ENCODE measurements at regions of chr2 and their contacts with region 1.

Region 1: DNA sequence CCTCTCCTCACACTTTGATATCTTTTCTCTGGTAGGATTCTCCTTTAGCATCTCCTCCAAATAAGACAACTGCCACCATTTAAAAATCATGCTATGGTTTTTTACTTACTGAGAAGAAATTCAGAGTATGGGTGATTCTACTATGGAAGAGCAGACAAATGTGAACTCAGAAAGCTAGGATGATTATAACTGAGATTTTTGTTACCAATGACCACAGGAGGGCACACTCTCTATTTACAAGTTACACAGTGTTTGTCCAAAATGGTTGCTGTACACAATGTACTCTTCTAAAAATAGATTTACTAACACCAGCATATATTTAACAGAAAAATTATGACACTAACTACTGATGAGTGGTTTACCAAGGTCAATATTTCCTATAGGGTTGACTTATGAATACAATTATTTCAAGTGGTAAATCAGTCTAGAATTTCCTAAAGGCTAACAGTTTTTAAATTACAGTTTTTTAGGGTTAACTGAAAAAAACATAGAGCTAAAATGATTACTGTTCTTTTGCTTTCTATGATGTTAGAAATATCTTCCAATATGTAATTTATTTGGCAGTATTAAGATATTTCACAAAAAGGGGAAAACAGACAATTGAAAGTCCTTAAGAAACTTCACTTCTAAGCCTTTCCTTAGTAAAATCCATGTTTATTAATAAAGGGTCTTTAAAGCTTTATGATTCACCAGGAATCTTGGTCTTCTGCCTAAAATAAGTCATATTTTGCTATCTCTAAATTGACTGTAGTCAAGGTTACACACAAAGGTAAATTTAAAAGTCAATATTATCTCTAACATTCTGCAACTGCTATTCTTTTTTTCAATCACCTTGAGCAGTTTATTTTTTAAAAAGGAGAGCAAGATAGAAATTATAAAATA is 57.2 kb downstream of the MAP4K3 start:
- DNase-seq: peak; percentile 31
- ATAC-seq: peak; percentile 84
- H3K4me3 ChIP-seq: no peak overlapping the region
- H3K27ac ChIP-seq: no peak overlapping the region
- H3K4me1 ChIP-seq: no peaks in the 10 kb centered on the region; the same call in 1 of the 2 replicates
- H3K27me3 ChIP-seq: no peaks in the 10 kb centered on the region
- CTCF ChIP-seq: peak; percentile 46 to 66 (median 48); a peak in 4 of 6 replicates
- EP300 ChIP-seq: no peak
- POLR2A ChIP-seq: no peak
- RAD21 ChIP-seq: peak; percentile 66

Region 2: GRCh38 chr2:39266139-39266805 is 113.6 kb before region 1 on chr2:
- CTCF ChIA-PET with region 1: interaction called, 3 read pairs
- POLR2A ChIA-PET with region 1: no interaction called
- RAD21 ChIA-PET with region 1: interaction called, 3 read pairs
- SMC1A ChIA-PET with region 1: interaction called, 13 read pairs
- in situ Hi-C with region 1: no loop called
- intact Hi-C with region 1: no loop called
- DNase-seq: peak; percentile 53
- ATAC-seq: peak; percentile 88
- H3K4me3 ChIP-seq: no peak overlapping the region
- H3K27ac ChIP-seq: peak overlapping the region; percentile 14; the same call in 1 of the 2 replicates
- H3K4me1 ChIP-seq: peaks cover 29% of the 10 kb centered on the region; the same call in 1 of the 2 replicates
- H3K27me3 ChIP-seq: no peaks in the 10 kb centered on the region
- CTCF ChIP-seq: no peak
- EP300 ChIP-seq: no peak
- POLR2A ChIP-seq: no peak
- RAD21 ChIP-seq: no peak

Region 3: GRCh38 chr2:39368846-39369245 is 11.0 kb before region 1 on chr2:
- CTCF ChIA-PET with region 1: interaction called, 21 read pairs
- POLR2A ChIA-PET with region 1: interaction called, 3 read pairs
- RAD21 ChIA-PET with region 1: interaction called, 8 read pairs
- SMC1A ChIA-PET with region 1: interaction called, 5 read pairs
- in situ Hi-C with region 1: no loop called
- intact Hi-C with region 1: no loop called
- DNase-seq: no peak
- ATAC-seq: no peak
- H3K4me3 ChIP-seq: no peak overlapping the region
- H3K27ac ChIP-seq: no peak overlapping the region
- H3K4me1 ChIP-seq: no peaks in the 10 kb centered on the region
- H3K27me3 ChIP-seq: no peaks in the 10 kb centered on the region
- CTCF ChIP-seq: no peak
- EP300 ChIP-seq: no peak
- POLR2A ChIP-seq: no peak
- RAD21 ChIP-seq: no peak

Region 4: DNA sequence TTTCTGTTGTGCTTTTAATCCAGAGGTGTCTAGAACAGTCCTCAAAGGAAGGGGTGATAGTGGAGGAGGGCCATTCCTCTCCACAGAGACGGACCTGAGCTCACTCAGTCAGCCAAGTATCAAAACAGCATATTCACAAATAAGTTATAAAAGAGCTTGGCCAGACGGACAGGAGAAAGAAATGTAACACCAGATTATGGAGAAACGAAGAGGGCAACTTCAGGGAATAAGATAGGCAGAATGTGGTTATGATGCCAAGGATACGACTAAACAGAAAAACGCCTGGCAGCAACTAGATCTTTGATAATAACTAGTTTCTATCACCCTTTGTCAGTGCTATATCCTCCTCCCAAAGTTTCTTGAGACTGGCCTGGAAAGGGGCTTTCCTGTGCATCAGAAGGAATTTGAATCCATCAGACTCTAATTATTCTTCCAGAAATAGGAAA is 14.7 kb after region 1 on chr2:
- CTCF ChIA-PET with region 1: interaction called, 11 read pairs
- POLR2A ChIA-PET with region 1: no interaction called
- RAD21 ChIA-PET with region 1: interaction called, 3 read pairs
- SMC1A ChIA-PET with region 1: interaction called, 3 read pairs
- in situ Hi-C with region 1: no loop called
- intact Hi-C with region 1: no loop called
- DNase-seq: no peak
- ATAC-seq: no peak
- H3K4me3 ChIP-seq: no peak overlapping the region
- H3K27ac ChIP-seq: no peak overlapping the region
- H3K4me1 ChIP-seq: no peaks in the 10 kb centered on the region
- H3K27me3 ChIP-seq: no peaks in the 10 kb centered on the region
- CTCF ChIP-seq: no peak
- EP300 ChIP-seq: no peak
- POLR2A ChIP-seq: no peak
- RAD21 ChIP-seq: no peak

Region 5: GRCh38 chr2:39492095-39492590 is 112.3 kb after region 1 on chr2:
- CTCF ChIA-PET with region 1: interaction called, 4 read pairs
- POLR2A ChIA-PET with region 1: interaction called, 3 read pairs
- RAD21 ChIA-PET with region 1: interaction called, 9 read pairs
- SMC1A ChIA-PET with region 1: interaction called, 14 read pairs
- in situ Hi-C with region 1: no loop called
- intact Hi-C with region 1: loop called (anchors 5 kb)
- DNase-seq: peak; percentile 91
- ATAC-seq: peak; percentile 98
- H3K4me3 ChIP-seq: peak overlapping the region; percentile 24; the same call in 1 of the 2 replicates
- H3K27ac ChIP-seq: peak overlapping the region; percentile 67
- H3K4me1 ChIP-seq: peaks cover 21% of the 10 kb centered on the region
- H3K27me3 ChIP-seq: peaks cover 0 to 3% of the 10 kb centered on the region in 2 experiments; a peak in 2 of 4 replicates
- CTCF ChIP-seq: no peak
- EP300 ChIP-seq: peak; percentile 100
- POLR2A ChIP-seq: no peak
- RAD21 ChIP-seq: no peak; the same call in 1 of the 2 replicates

Region 6: GRCh38 chr2:39696838-39697237 is 317.0 kb after region 1 on chr2:
- CTCF ChIA-PET with region 1: interaction called, 10 read pairs
- POLR2A ChIA-PET with region 1: no interaction called
- RAD21 ChIA-PET with region 1: interaction called, 3 read pairs
- SMC1A ChIA-PET with region 1: no interaction called
- in situ Hi-C with region 1: no loop called
- intact Hi-C with region 1: no loop called
- DNase-seq: no peak
- ATAC-seq: no peak
- H3K4me3 ChIP-seq: no peak overlapping the region
- H3K27ac ChIP-seq: no peak overlapping the region
- H3K4me1 ChIP-seq: no peaks in the 10 kb centered on the region
- H3K27me3 ChIP-seq: no peaks in the 10 kb centered on the region
- CTCF ChIP-seq: no peak
- EP300 ChIP-seq: no peak
- POLR2A ChIP-seq: no peak
- RAD21 ChIP-seq: no peak

Measured in GM12878 (cell line).